Activated naive CD4-positive, alpha-beta T cell treated with anti-CD3 and anti-CD28 coated beads for 36 hours (primary cell): ENCODE measurements at regions of chr4 and their contacts with region 1.

Region 1: DNA sequence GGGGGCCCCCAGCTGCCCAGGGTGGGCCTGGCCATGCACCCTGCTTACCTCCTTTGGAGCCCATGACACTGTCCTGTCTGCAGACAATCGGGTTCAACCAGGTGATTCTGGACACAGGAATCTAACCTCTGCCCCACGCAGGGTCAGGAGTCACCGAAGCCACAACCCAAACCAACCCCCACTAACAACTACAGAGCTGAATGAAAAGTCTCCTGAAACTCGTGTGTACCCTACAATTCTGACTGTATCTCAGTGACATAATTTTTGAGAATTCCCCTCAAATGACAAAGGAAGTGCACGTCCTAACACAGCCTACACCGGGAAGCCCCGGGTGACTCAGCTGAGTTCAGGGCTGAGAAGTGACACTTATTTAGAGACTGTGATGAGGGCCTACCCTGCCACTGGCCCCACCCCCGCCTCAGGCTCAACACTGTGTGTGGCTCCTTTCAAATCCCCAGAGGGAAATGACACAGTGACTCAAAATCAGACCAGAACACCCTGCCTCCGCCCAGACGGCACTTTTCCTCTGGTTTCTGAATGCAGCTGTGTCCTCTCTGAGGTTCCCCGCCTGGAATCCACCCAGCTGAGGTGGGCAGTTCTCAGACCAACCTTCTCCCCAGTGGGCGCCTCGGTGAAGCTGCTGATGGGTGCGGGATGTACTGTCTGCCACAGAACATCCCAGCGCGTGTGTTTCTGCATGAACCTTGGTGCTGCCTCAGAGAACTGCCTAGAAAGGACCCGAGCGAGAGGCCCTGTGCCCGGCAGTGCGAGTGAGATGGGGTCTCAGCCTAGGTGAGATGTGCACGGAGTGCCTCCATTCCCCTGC is 9.9 kb downstream of the TNIP2 start:
- DNase-seq: peak; percentile 99
- H3K4me3 Mint-ChIP-seq: peak overlapping the region; percentile 27
- H3K27ac Mint-ChIP-seq: peak overlapping the region; percentile 90
- H3K4me1 Mint-ChIP-seq: peaks cover 64% of the 10 kb centered on the region
- H3K27me3 Mint-ChIP-seq: no peaks in the 10 kb centered on the region

Region 2: GRCh38 chr4:2262143-2262943 is 483.9 kb before region 1 on chr4:
- CTCF ChIA-PET with region 1: no interaction called
- intact Hi-C with region 1: loop called (anchors 1 kb)
- DNase-seq: peak; percentile 98
- H3K4me3 Mint-ChIP-seq: peak overlapping the region; percentile 69
- H3K27ac Mint-ChIP-seq: no peak overlapping the region
- H3K4me1 Mint-ChIP-seq: peaks cover 2% of the 10 kb centered on the region
- H3K27me3 Mint-ChIP-seq: no peaks in the 10 kb centered on the region

Region 3: DNA sequence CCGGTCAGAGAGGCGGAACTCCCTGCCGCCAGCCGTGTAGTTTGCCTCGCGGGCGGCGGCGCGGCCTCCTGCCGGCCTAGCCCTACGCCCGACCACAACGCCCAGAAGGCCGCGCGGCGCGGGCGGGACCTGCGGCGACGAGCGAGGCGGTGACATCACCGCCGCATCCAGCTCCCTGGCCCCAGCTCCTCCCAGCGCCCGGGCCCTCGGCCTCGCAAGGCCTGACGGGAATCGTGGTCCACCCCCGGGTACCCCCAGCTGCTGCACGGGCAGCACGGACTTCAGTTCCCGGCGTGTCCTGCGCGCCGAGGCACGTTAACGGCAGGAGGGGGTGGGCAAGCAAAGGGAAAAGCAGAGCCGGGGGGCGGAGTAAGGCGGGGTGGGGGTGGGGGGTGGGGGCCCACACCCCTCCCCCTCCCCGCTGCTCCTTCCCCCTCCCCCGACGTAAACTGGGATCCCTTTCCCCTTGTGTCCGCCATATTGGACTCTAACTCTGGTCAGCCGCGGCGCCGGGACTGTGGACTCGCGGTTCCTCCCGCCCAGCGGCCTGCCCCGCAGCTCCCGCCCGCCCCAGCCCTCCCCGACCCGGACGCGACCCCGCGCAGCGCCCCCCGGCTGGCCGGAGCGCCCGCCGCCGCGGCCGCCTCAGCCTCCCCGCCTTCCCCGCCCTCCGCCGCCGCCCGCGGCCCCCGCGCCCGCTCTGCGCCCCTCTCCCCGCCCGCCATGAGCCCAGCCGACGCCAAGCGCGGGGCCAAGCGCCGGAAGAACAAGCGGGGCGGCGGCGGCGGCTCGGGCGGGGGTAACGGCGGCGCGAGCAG is 209.8 kb before region 1 on chr4 and contains the start of gene FAM193A:
- CTCF ChIA-PET with region 1: no interaction called
- intact Hi-C with region 1: loop called (anchors 1 kb)
- DNase-seq: peak; percentile 99
- H3K4me3 Mint-ChIP-seq: peak within 1 kb of the TSS; percentile 86
- H3K27ac Mint-ChIP-seq: peak within 1 kb of the TSS; percentile 83
- H3K4me1 Mint-ChIP-seq: peaks cover 18% of the 10 kb centered on the region
- H3K27me3 Mint-ChIP-seq: no peaks in the 10 kb centered on the region
- total RNA-seq, gene FAM193A: 20.1 to 20.4 TPM

Region 4: DNA sequence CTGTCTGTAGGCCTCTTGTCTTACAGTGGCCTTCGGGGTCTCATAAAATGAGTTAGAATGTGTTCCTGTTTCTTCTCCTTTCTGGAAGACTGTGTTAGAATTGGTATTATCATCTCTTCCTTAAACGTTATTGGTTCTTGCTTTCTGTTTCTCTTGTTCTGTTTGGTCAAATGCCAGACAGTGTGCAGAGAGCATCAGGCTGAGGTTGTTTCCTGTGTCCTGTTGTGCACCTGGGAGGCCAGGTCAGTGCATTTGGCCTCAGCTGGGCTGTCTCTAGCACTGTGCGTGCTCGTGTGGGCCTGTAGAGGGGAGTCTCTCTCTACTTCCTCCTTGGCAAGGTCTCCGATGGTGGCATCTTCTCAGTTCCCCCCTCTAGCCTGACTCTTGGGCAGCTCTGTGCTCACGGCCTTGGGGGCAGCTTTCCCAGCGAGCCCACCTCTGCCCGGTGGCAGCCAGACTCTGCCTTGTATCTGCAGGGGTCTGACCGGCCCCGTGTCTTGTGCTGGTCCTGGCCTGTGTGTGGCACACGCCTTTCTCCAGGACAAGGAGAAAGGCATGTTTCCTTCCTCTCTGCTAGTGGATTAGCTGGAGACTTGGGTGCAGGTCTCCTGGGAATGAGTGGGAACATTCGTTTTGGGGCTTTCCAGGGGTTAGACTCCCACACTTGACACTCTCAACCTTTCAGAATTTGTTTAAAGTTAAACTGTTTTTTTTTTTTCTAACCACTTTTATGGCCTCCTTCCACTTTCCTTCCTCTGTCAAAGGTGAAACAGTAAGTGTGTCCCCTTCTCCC is 147.5 kb before region 1 on chr4:
- CTCF ChIA-PET with region 1: no interaction called
- intact Hi-C with region 1: no loop called
- DNase-seq: peak; percentile 17
- H3K4me3 Mint-ChIP-seq: no peak overlapping the region
- H3K27ac Mint-ChIP-seq: peak overlapping the region; percentile 47
- H3K4me1 Mint-ChIP-seq: peaks cover 54% of the 10 kb centered on the region
- H3K27me3 Mint-ChIP-seq: no peaks in the 10 kb centered on the region

Region 5: DNA sequence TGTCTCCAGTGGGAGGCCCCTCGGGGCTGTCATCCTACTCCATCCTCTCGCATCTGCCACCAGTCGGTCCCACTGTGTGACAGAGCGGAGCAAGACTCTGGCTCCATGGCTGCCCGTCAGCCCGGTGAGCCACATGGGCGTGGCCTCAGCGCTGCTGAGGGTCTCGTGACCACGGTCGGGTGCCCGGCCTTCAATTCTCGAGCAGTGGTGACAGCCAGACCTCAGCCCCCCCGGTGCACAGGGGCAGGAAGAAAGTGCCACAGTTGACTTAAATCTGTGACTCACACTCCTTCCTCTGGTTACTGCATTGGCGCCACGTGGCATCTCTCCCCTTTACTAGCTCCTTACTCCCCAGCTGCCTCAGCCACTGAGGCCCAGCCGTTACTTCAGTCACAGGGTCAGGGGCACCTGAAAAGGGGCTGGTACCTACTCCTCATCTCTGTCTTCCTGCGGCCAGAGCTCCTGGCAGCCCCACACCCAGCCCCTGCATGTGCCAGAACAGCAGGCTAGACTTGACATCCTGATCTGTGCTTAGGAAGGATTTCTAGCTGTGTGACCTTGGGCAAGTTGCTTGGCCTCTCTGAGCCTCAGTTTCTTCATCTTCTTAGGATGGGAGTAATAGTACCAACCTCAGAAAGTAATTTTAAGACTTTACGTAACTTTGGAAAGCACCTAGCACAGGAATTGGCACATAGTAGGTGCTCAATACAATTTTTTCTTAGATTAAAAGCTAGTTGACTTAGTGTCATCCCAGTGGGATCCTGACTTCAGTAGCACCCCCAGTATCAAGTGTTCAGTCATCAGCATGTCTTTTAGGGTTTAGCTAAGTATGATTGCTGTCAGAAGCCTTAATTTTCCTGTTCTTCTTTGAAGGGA is 56.1 kb before region 1 on chr4:
- CTCF ChIA-PET with region 1: no interaction called
- intact Hi-C with region 1: loop called (anchors 1 kb)
- DNase-seq: peak; percentile 59
- H3K4me3 Mint-ChIP-seq: no peak overlapping the region
- H3K27ac Mint-ChIP-seq: peak overlapping the region; percentile 47
- H3K4me1 Mint-ChIP-seq: peaks cover 34% of the 10 kb centered on the region
- H3K27me3 Mint-ChIP-seq: no peaks in the 10 kb centered on the region

Region 6: DNA sequence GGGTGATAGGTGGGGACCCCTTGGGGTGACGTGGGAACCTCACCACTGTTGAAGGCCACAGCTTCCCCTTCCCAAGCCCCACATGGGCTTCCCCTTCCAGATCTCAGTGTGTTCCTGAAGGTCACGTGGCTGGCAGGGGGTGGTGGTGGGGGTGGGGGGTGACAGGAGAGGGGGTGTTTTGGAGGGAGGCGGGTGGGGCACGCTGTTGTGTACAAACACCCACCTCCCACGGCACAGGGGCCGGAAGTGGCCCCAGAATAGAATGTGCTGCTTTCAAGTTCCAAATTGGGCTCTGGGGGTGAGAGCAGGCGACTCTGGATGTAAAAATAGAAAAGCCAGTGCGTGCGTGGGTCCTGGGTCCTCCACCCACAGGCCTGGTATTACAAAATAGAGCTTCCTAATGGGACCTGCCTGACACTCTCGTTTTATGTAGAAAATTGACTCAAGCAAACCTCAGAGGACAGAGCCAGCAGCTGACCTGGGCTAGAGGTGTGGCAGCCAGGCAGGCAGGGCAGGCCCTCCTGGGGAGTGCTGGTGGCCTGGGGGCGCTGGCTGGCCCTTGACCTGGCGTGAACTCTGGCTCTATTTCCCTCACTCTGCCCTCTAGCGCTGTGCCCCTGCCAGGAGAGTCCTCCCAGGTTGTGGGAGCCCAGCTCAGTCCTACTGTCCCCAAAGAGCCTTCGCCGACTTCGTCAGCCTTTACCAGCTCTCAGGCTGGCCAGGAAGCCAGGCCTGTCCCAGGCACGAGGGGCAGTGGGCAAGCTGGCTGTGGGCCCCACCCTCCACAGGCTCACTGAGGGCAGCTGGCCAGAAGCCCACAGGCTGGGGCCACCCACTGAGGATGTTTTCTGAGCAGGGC is 41.3 kb after region 1 on chr4:
- CTCF ChIA-PET with region 1: no interaction called
- intact Hi-C with region 1: loop called (anchors 1 kb)
- DNase-seq: peak; percentile 73
- H3K4me3 Mint-ChIP-seq: no peak overlapping the region
- H3K27ac Mint-ChIP-seq: peak overlapping the region; percentile 96
- H3K4me1 Mint-ChIP-seq: peaks cover 52% of the 10 kb centered on the region
- H3K27me3 Mint-ChIP-seq: no peaks in the 10 kb centered on the region

Region 7: GRCh38 chr4:2934813-2935761 is 188.9 kb after region 1 on chr4:
- CTCF ChIA-PET with region 1: no interaction called
- intact Hi-C with region 1: loop called (anchors 1 kb)
- DNase-seq: peak; percentile 97
- H3K4me3 Mint-ChIP-seq: peak overlapping the region; percentile 89
- H3K27ac Mint-ChIP-seq: peak overlapping the region; percentile 96
- H3K4me1 Mint-ChIP-seq: peaks cover 57% of the 10 kb centered on the region
- H3K27me3 Mint-ChIP-seq: no peaks in the 10 kb centered on the region

Region 8: DNA sequence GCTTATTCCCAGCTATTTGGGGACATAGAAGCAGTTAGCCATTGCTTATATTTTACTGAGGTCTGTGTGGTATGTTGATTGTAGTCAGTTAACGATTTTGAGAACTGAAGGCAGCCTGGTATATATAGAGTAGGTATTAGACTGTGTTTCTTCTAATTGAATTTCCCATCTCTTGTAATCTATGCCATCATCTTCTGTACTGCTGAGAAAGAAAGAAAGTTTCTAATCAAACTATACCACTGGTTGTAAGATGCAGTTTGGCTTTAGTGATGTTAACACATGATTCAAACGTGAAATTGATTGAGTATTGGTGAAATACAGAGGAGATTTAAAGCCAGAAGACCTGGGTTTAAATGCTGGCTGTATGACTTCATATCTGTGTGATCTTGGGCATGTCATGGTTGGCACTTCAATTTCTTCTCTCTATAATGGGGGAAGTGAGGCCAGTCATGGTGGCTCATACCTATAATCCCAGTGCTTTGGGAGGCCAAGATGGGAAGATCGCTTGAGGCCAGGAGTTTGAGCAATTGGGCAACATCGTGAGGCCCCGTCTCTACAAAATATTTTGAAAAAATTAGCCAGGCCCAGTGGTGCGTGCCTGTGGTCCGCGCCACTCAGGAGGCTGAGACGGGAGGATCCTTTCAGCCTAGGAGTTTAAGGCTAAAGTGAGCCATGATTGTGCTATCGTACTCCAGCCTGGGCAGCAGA is 339.9 kb after region 1 on chr4:
- CTCF ChIA-PET with region 1: no interaction called
- intact Hi-C with region 1: loop called (anchors 2 kb)
- DNase-seq: no peak
- H3K4me3 Mint-ChIP-seq: peak overlapping the region; percentile 23
- H3K27ac Mint-ChIP-seq: peak overlapping the region; percentile 86
- H3K4me1 Mint-ChIP-seq: peaks cover 69% of the 10 kb centered on the region
- H3K27me3 Mint-ChIP-seq: no peaks in the 10 kb centered on the region